Activated CD4-positive, alpha-beta memory T cell treated with anti-CD3 and anti-CD28 coated beads for 36 hours (primary cell): ENCODE measurements at regions of chr15 and their contacts with region 1.

Region 1: GRCh38 chr15:65787260-65787659 is 4.8 kb downstream of the DENND4A start:
- DNase-seq: no peak
- H3K4me3 Mint-ChIP-seq: peak overlapping the region; percentile 53
- H3K27ac Mint-ChIP-seq: peak overlapping the region; percentile 85
- H3K4me1 Mint-ChIP-seq: peaks cover 39% of the 10 kb centered on the region
- H3K27me3 Mint-ChIP-seq: no peaks in the 10 kb centered on the region

Region 2: DNA sequence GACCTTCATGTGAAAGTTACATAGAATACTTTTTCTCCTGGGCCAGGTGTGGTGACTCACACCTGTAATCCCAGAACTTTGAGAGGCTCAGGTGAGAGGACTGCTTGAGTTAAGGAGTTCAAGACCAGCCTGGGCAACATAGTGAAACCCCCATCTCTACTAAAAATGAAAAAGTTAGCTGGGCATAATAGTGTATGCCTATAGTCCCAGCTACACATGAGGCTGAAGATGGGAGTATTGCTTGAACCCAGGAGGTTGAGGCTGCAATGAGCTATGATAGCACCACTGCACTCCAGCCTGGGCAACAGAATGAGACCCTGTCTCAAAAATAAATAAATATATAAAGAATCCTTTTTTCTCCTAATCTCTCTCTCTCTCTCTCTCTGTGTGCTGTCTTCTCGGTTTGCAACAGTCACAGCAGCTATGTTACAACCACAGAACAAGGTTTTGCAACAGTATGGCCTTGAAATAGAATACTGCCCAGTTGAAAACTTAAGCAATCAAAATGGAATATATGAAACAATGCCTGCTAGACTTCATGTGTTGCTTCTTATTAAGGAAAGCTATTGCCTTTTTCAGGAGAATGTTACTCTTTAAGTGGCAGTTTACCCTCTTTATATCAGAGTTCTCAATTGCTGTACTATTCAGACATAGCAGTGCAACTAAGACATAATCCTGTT is 17.1 kb after region 1 on chr15:
- CTCF ChIA-PET with region 1: no interaction called
- POLR2A ChIA-PET with region 1: interaction called, 11 read pairs
- intact Hi-C with region 1: loop called (anchors 1 kb)
- DNase-seq: no peak
- H3K4me3 Mint-ChIP-seq: no peak overlapping the region
- H3K27ac Mint-ChIP-seq: peak overlapping the region; percentile 31
- H3K4me1 Mint-ChIP-seq: peaks cover 35% of the 10 kb centered on the region
- H3K27me3 Mint-ChIP-seq: no peaks in the 10 kb centered on the region